Endothelial cell of umbilical vein (primary cell): ENCODE measurements at regions of chr9 and their contacts with region 1.

Region 1: DNA sequence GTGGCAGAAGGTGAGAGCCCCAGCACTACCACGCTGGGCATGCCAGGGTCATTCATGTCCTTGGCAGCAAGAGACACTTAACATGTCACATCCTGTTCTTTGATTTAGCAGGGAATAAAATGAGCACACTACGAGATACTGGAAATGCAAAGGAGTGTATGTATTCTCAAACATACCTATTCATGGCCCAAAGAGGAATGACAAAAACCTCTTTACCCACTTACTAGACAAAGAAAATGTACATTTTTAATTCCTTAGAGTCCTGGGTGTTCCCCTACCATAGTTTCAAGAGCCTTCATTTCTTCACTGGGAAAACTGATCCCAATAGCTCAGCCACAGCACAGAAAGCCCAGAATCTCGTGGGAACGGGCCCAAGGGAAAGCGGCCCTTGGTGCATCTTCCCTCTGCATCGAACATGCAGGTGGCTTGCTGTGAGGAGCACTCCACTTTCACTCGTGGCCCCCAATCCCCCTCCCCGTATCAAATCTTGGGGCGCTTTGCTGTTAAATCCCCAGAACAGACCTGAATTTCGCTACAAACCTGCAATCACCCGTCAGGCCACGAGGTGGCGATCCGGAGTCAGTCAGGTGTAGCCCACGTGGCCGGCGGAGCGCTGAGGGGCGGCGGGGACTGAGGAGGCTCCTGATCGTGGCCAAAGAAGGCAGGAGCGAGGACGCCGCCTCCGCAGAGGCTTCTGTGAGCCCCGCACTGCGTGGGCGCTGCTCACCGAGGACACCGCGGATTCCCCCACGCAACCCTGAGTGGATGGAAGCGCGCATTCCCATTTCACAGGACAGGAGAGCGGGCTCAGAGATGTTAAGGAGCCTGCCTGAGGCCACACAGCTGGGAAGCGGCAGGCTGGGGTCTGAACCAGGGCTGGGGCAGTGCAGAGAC is 91.4 kb downstream of the LMX1B start:
- DNase-seq: peak; percentile 69
- H3K4me3 ChIP-seq: no peak overlapping the region
- H3K27ac ChIP-seq: no peak overlapping the region
- H3K4me1 ChIP-seq: no peaks in the 10 kb centered on the region
- H3K27me3 ChIP-seq: peaks cover 0 to 5% of the 10 kb centered on the region in 2 experiments
- CTCF ChIP-seq: peak; percentile 87 to 90
- POLR2A ChIP-seq: no peak

Region 2: GRCh38 chr9:126715382-126715781 is 10.3 kb after region 1 on chr9:
- CTCF ChIA-PET with region 1: interaction called, 14 read pairs
- POLR2A ChIA-PET with region 1: no interaction called
- dilution Hi-C with region 1: no loop called
- intact Hi-C with region 1: no loop called
- DNase-seq: no peak
- H3K4me3 ChIP-seq: no peak overlapping the region
- H3K27ac ChIP-seq: no peak overlapping the region
- H3K4me1 ChIP-seq: no peaks in the 10 kb centered on the region
- H3K27me3 ChIP-seq: peaks cover 4 to 7% of the 10 kb centered on the region in 2 experiments
- CTCF ChIP-seq: no peak
- POLR2A ChIP-seq: no peak

Region 3: DNA sequence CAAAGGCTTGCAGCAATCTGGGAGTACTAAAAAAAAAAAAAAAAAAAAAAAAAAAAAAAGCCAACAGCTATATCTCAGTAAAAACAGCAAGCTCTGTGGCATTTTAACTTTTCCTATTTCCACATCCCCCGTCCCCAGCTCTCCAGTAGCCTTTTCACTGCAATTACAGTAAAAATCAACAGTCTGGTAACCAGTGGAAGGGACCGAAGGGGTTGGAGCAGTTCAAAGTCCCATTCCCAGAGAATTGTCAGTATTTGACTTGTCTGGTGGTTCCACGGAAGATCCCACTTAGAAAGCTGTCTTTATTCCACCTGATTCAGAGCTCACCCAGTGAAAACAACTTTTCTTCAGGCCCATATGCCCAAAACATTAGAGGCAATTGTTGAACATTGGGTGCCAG is 27.9 kb after region 1 on chr9:
- CTCF ChIA-PET with region 1: interaction called, 15 read pairs
- POLR2A ChIA-PET with region 1: no interaction called
- dilution Hi-C with region 1: no loop called
- intact Hi-C with region 1: no loop called
- DNase-seq: no peak
- H3K4me3 ChIP-seq: no peak overlapping the region
- H3K27ac ChIP-seq: no peak overlapping the region
- H3K4me1 ChIP-seq: peaks cover 4% of the 10 kb centered on the region
- H3K27me3 ChIP-seq: peaks cover 2 to 8% of the 10 kb centered on the region in 2 experiments
- CTCF ChIP-seq: no peak
- POLR2A ChIP-seq: no peak

Region 4: DNA sequence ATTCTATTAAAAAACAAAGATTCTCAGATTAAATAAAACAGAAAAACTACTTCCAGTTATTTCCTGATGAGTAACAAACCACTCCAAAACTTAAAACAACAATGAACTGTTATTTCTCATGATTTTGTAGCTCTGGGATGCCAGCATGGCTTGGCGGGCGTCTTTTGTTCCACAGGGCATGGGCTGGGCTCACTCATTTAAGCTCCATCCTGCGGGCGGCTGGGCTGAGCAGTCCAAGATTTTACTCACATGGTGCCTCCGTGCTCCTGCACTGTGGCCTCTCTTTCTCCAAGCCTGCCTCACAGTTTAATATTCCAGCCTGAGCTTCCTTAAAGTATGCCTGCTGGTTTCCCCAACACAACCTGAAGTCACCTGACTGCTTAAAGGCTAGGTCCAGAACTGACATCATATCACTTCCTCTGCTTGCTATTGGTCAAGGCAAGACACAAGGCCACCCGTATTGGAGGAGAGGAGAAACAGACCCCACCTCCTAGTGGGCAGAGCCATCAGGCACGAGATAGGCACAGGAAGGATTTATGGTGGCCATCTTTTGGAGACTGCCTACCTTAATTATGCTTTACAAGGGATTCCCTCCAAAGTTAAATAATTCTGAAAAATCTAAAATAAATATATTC is 58.1 kb after region 1 on chr9:
- CTCF ChIA-PET with region 1: interaction called, 10 read pairs
- POLR2A ChIA-PET with region 1: no interaction called
- dilution Hi-C with region 1: no loop called
- intact Hi-C with region 1: no loop called
- DNase-seq: no peak
- H3K4me3 ChIP-seq: no peak overlapping the region
- H3K27ac ChIP-seq: no peak overlapping the region
- H3K4me1 ChIP-seq: no peaks in the 10 kb centered on the region
- H3K27me3 ChIP-seq: no peaks in the 10 kb centered on the region
- CTCF ChIP-seq: no peak
- POLR2A ChIP-seq: no peak

Region 5: GRCh38 chr9:126781186-126782052 is 76.3 kb after region 1 on chr9:
- CTCF ChIA-PET with region 1: interaction called, 675 read pairs
- POLR2A ChIA-PET with region 1: no interaction called
- dilution Hi-C with region 1: no loop called
- intact Hi-C with region 1: loop called (anchors 1 kb)
- DNase-seq: peak; percentile 69
- H3K4me3 ChIP-seq: no peak overlapping the region
- H3K27ac ChIP-seq: no peak overlapping the region
- H3K4me1 ChIP-seq: no peaks in the 10 kb centered on the region
- H3K27me3 ChIP-seq: peaks cover under 1% of the 10 kb centered on the region in 2 experiments
- CTCF ChIP-seq: peak; percentile 78 to 90
- POLR2A ChIP-seq: no peak